GM10248 (cell line): ENCODE measurements at regions of chr13 and their contacts with region 1.

Region 1: GRCh38 chr13:73368608-73369007 is 309.8 kb downstream of the KLF5 start:
- DNase-seq: no peak
- CTCF ChIP-seq: no peak

Region 2: DNA sequence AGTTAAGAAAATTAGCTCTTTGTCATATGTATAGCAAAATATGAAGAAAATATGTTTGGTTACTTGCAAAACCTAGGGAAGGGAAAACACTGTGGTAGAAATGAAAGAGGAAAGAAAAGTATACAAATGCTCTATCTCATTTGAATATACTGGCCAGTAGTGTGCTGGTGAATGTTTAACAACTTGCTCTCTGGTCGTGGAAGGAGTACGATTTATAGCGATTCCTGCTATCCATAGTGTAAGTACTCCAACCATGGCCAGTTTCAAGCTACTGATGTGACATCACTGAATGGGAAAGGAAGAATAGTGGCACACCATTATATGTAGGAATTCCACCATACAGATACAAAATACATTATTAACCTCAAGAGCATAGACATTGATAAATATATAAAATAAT is 631.6 kb before region 1 on chr13:
- CTCF ChIA-PET with region 1: no interaction called
- POLR2A ChIA-PET with region 1: no interaction called
- DNase-seq: no peak
- CTCF ChIP-seq: no peak

Region 3: DNA sequence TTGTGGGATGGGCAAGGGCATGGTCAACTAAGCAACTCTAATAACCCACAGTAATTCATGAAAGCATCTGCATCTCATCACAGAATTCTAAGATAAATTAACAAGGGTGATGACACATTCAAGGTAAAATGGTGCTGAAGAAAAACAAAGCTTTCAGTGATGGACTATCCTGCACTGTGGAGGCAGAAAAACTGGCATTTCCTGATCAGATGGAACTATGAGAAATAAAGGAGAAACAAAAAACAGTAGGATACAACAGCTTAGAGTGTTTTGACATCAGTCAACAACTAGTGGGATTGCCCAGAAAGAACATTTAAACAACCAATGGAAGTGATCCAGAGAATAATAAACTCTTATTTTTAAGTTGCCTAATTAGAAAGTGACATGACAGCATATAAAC is 17.2 kb after region 1 on chr13:
- CTCF ChIA-PET with region 1: interaction called, 10 read pairs
- POLR2A ChIA-PET with region 1: no interaction called
- DNase-seq: no peak
- CTCF ChIP-seq: no peak